Gastrocnemius medialis (tissue), 4 donors: ENCODE measurements at regions of chr5 and their contacts with region 1.

Region 1: DNA sequence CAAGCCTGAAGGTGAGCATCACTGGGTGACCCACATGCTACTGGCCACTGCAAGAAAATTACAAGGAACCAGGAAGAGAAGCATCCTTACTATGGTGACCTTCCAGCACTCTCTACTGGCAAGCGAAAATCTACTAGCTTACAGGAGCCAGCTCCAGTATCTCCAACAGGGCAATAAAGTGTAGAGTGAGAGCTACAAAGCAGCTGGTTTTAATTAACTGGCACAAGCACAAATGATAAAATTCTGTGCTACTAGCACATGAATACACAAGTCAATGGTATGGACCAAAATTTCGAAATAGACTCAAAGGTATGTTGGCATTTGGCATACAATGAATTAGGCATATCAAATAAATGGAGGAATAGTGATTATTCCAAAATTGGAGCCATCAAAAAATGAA is 113.2 kb upstream of the CAST start:
- DNase-seq: no peak
- ATAC-seq: no peak
- H3K4me3 ChIP-seq: no peak overlapping the region
- H3K27ac ChIP-seq: no peak overlapping the region
- H3K4me1 ChIP-seq: no peaks in the 10 kb centered on the region
- H3K27me3 ChIP-seq: no peaks in the 10 kb centered on the region
- CTCF ChIP-seq: no peak
- POLR2A ChIP-seq: no peak

Region 2: GRCh38 chr5:96226941-96227552 is 321.9 kb before region 1 on chr5:
- in situ Hi-C with region 1: no loop called
- intact Hi-C with region 1: no loop called
- DNase-seq: no peak
- ATAC-seq: peak; percentile 39 to 54
- H3K4me3 ChIP-seq: no peak overlapping the region
- H3K27ac ChIP-seq: no peak overlapping the region
- H3K4me1 ChIP-seq: peaks cover 0 to 9% of the 10 kb centered on the region in 2 donors
- H3K27me3 ChIP-seq: no peaks in the 10 kb centered on the region
- CTCF ChIP-seq: no peak
- POLR2A ChIP-seq: no peak

Region 3: DNA sequence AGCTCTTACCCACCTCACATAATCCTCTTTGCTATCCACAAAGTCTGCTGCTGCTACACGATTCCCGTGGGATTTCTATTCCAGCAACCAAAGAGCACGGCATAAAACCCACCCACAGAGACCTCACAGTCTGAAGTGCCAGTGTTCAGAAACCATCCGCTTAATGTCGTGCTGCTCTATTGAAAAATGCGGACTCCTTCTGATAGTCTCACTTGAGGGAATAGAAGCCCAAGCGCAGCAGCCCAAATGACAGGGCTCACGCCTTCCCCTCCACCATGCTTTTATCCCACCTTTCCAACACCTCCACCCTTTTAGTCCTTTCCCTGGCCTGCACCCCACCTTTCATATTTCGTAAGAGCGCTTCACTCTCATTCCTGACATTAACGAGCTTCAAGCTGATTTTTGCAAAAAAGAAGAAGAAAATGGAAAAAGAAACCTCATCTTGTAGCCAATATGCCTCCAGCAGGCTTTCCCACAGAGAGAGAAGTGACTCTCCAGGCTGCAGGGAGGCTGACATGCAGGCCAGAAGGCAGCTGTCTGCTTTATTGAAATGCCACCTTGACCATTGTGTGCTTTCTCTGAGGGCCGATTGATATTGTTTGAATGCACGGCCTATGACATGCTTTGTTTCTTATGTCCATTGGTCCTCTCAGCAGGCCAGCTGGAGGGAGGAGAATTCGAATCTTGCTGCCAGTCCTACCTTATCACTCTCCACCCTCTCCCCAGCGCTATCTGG is 45.3 kb before region 1 on chr5:
- in situ Hi-C with region 1: no loop called
- intact Hi-C with region 1: loop called (anchors 1 kb)
- DNase-seq: no peak
- ATAC-seq: no peak
- H3K4me3 ChIP-seq: no peak overlapping the region
- H3K27ac ChIP-seq: no peak overlapping the region
- H3K4me1 ChIP-seq: no peaks in the 10 kb centered on the region
- H3K27me3 ChIP-seq: no peaks in the 10 kb centered on the region
- CTCF ChIP-seq: no peak
- POLR2A ChIP-seq: no peak

Region 4: DNA sequence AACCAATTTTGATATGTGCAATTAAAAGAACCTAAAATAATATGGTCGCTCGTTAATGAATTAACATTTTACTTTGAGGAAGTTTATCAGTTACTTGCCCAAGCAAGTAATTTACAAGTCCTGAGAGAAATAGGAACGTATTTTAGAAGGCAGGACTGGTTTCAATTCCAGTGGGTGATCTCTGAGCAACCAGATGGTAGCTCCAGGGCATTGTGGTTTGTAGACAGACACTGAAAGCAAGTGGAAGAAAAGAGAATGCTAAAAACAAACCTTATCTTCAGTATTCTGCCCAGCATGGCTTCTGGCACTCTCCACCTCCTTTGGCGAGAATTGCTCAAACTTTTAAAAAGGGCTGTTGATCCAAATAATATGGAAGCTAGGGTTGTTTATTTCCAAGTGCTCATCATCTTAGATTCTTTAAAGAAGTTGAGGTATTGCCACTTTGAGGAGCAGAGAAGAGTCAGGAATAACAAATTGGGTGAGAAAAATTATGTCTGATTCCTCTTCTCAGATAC is 295.6 kb after region 1 on chr5:
- in situ Hi-C with region 1: no loop called
- intact Hi-C with region 1: no loop called
- DNase-seq: no peak
- ATAC-seq: no peak
- H3K4me3 ChIP-seq: no peak overlapping the region
- H3K27ac ChIP-seq: no peak overlapping the region
- H3K4me1 ChIP-seq: no peaks in the 10 kb centered on the region
- H3K27me3 ChIP-seq: no peaks in the 10 kb centered on the region
- CTCF ChIP-seq: no peak
- POLR2A ChIP-seq: no peak